Common myeloid progenitor, CD34-positive (primary cell): ENCODE measurements at regions of chr19 and their contacts with region 1.

Region 1: GRCh38 chr19:21604351-21604926 is 99.0 kb downstream of the ZNF429 start:
- DNase-seq: peak; percentile 46 to 82 (median 81)
- H3K4me3 ChIP-seq: peak overlapping the region in 6 of 7 experiments; percentile 55 to 77 (median 66)
- H3K27ac ChIP-seq: peak overlapping the region; percentile 55 to 92
- H3K4me1 ChIP-seq: peaks cover 22 to 70% (median 42%) of the 10 kb centered on the region in 4 experiments
- H3K27me3 ChIP-seq: no peaks in the 10 kb centered on the region

Region 2: DNA sequence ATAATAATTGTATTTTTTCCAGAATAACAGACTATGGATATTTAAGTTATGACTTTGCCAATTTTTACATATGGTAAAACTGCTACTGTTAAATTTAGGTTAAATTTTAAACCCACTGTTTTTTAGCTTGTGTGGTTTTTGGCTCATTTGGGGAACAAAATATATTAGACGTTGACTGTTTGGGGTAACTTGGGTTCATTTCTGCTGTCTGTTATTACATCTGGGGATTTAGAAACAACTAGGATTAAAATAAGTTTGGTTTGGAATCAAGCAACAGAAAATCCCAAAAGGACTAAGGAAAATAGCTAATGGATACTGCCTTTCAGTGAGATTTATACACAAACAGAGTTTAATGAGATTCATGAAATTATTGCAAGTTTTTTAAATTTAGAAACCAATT is 70.0 kb after region 1 on chr19:
- CTCF ChIA-PET with region 1: interaction called, 4 read pairs
- POLR2A ChIA-PET with region 1: interaction called, 10 read pairs
- DNase-seq: peak in 2 of 3 donors; percentile 8 to 31
- H3K4me3 ChIP-seq: no peak overlapping the region
- H3K27ac ChIP-seq: no peak overlapping the region
- H3K4me1 ChIP-seq: peaks cover 0 to 52% (median 11%) of the 10 kb centered on the region in 4 experiments
- H3K27me3 ChIP-seq: no peaks in the 10 kb centered on the region

Region 3: GRCh38 chr19:21848701-21849100 is 244.3 kb after region 1 on chr19:
- CTCF ChIA-PET with region 1: no interaction called
- POLR2A ChIA-PET with region 1: no interaction called
- DNase-seq: no peak
- H3K4me3 ChIP-seq: no peak overlapping the region
- H3K27ac ChIP-seq: no peak overlapping the region
- H3K4me1 ChIP-seq: peaks cover 0 to 13% (median 9%) of the 10 kb centered on the region in 4 experiments
- H3K27me3 ChIP-seq: no peaks in the 10 kb centered on the region